ENCODE measurements at regions of chr19 and their contacts with region 1.

Region 1: DNA sequence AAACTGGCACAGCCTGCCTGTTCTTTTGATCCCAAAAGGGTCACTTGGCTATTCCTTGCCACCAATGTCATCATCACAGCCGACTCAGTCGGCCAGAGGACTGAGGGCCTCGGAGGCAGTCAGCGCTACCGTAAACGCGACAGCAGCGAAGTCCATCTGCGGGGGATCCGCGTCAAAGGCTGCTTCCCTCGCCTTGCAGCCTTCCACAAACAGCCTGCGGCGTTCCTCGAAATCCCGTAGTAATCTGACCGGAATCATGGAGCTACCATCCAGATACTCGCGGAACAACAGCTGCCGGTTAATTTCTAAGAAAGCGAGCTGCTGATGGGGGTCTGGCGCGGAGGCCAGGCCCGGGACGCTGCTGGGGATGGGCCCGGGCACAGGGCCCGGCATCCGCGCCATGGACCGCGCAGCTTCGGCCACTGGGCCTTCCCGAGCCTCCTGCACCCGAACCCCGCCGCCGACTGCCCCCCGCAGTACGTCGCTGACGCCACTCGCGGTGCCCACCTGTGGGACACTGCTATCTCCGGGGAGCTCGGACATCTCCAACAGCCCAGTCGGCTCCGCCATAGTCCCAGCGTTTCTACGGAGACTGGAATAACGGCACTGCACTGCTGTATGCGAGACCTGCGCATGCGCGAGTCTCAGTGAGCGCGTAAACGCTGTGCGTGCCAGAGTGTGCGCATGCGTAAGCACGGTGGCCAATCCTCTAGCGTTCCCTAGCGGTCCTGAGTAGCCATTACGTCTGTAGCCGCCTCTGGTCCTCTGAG is at the start of gene EID2B:
- DNase-seq: peak; percentile 94 to 98 (median 95)
- H3K4me3 ChIP-seq: peak within 1 kb of the TSS; percentile 71 to 95 (median 87)
- H3K27ac ChIP-seq: peak within 1 kb of the TSS; percentile 70 to 85
- H3K4me1 ChIP-seq: peaks cover 3 to 11% (median 8%) of the 10 kb centered on the region in 4 experiments
- H3K27me3 ChIP-seq: no peaks in the 10 kb centered on the region

Region 2: GRCh38 chr19:39445265-39446111 is 86.9 kb before region 1 on chr19 and contains the start of gene SUPT5H:
- CTCF ChIA-PET with region 1: interaction called, 14 read pairs
- POLR2A ChIA-PET with region 1: no interaction called
- DNase-seq: peak; percentile 99
- H3K4me3 ChIP-seq: peak within 1 kb of the TSS; percentile 86 to 100 (median 98)
- H3K27ac ChIP-seq: peak within 1 kb of the TSS; percentile 88 to 98
- H3K4me1 ChIP-seq: peaks cover 6 to 36% (median 26%) of the 10 kb centered on the region in 4 experiments
- H3K27me3 ChIP-seq: no peaks in the 10 kb centered on the region

Measured in common myeloid progenitor, CD34-positive (primary cell).